GM10248 (cell line): ENCODE measurements at regions of chr1 and their contacts with region 1.

Region 1: GRCh38 chr1:173429471-173430402 is 47.4 kb upstream of the PRDX6 start:
- DNase-seq: no peak
- CTCF ChIP-seq: peak; percentile 79

Region 2: DNA sequence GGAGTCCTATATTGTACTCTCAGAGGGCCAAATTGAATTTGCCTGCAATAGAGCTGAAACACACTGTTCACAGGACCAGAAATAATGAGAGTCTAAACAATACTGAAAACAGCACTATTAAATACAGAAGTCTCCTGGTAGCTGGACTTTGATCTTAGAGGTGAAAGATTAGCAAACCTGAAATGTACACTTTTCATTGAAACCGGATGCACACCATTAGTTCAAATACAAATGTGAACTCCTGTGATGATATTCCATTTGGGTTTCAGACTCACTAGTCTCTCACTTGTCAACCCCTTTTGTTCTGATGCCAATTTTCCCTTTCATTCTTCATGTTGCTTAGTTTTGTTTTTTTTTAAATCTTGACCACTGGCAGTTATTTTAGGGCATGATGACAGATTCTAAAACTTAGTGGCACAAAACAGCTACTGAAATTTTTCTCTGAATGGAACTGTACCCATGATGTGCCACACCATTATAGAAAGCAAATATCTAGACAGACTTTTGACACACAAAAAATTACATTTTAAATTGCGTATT is 216.7 kb before region 1 on chr1:
- CTCF ChIA-PET with region 1: no interaction called
- POLR2A ChIA-PET with region 1: no interaction called
- DNase-seq: peak; percentile 53
- CTCF ChIP-seq: no peak

Region 3: GRCh38 chr1:173453982-173454381 is 24.2 kb after region 1 on chr1:
- CTCF ChIA-PET with region 1: interaction called, 11 read pairs
- POLR2A ChIA-PET with region 1: interaction called, 3 read pairs
- DNase-seq: no peak
- CTCF ChIP-seq: no peak

Region 4: DNA sequence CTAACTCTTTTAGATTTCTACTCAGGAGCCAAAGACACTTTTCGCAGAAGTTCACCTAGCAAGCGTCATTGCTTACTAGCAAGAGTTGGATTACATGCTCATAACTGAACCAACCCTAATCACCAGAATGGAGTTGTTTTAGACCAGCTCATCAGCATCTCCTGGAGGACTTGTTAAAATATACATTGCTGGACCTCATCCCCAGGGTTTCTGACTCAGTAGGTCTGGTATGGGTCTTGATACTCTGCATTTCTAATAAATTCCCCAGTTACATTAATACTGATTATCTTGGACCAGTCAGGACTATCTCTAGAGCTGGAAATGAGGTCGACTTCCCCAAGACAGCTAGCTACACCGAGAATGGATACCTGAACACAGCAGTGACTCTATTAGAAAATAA is 37.7 kb after region 1 on chr1:
- CTCF ChIA-PET with region 1: interaction called, 17 read pairs
- POLR2A ChIA-PET with region 1: no interaction called
- DNase-seq: no peak
- CTCF ChIP-seq: no peak

Region 5: DNA sequence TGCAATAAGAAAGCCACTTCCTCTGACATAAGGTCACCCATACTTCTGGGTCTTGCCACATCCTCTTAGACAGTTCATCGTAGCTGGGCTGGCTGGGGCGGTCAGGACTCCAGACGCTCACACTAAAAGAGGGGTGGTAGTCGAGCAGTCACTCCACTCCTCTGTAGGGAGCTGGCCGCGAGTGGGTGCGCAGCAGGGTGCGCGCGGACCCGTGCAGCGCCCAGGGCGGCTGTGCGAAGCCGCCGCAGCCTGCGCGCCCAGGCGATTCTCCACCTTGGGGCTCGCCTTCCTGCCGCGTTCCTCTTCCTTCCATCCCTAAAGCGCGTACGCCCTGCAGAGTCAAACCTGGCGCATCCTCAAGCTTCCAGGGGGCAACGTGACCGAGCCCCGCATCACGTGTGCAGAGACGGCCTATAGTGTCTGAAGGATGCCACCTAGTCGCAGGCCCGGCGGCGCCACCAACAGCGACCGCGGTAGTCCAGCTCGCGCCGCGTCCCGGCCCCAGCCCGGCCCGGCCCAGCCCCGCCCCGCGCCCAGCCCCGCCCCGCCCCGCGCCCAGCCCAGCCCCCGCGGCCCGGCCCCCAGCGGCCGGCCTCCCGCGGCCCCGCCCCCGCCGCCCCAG is 47.0 kb after region 1 on chr1:
- CTCF ChIA-PET with region 1: interaction called, 35 read pairs
- POLR2A ChIA-PET with region 1: no interaction called
- DNase-seq: peak; percentile 95
- CTCF ChIP-seq: peak; percentile 23

Region 6: DNA sequence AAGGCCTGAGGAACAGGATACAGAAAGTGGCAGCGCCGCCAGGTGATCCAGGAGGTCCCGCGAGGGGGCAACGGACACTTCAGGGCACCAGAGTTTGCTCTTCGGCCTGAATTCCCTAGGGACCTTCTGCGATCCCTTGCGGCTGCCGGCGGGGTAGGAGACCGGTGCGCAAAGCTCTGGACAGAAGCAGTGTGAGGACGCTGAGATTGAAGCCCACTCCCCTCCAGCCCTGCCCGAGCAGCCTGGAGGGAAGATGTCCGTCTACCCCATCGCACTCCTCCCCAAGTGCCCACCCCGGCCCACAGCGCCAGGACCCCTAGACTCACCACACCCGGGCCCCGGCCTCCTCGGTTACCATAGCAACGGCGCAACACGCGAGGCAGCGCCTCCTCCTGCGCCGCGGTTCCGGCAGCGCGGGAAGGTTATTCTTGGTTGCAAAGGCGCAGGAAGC is 239.8 kb after region 1 on chr1 and contains the start of gene ANKRD45:
- CTCF ChIA-PET with region 1: no interaction called
- POLR2A ChIA-PET with region 1: no interaction called
- DNase-seq: peak; percentile 22
- CTCF ChIP-seq: no peak

Region 7: GRCh38 chr1:173818459-173818858 is 388.7 kb after region 1 on chr1:
- CTCF ChIA-PET with region 1: interaction called, 25 read pairs
- POLR2A ChIA-PET with region 1: no interaction called
- DNase-seq: no peak
- CTCF ChIP-seq: no peak

Region 8: GRCh38 chr1:173824331-173825081 is 394.8 kb after region 1 on chr1 and contains the starts of genes CENPL and DARS2:
- CTCF ChIA-PET with region 1: interaction called, 25 read pairs
- POLR2A ChIA-PET with region 1: no interaction called
- DNase-seq: peak; percentile 90
- CTCF ChIP-seq: peak; percentile 25